MCF 10A (cell line): ENCODE measurements at regions of chr5 and their contacts with region 1.

Region 1: DNA sequence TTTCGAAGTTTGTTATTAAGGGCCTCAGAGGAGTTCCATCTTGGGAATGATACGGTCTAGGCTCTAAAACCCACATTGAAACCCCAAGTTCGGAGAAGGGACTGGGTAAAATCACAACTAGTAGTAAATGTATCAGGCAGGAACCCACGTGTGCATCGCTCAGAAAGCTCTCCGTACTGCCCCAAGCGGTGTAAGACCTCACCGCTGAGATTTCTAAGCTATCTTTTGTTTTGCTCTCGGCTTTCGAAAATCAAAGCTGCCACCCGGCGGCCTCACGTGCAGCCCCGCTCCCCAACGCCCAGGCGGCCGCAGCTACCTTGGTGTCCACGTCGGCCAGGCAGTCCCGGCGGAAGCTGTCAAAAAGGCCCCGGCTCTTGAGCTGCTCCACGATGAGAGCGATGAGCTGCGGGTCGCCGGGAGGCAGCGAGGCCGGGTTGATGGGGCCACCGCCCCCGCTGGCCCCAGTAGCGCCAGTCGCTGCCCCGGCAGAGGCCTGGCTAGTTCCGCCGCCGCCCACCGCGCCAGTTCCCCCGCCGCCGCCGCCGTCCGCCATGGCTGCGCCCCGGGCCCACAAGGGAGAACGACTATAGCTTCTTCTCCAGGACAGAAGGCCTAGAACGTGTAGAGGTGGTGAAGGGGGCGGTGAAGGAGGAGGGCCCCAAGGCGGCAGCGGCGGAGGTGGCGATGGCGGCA is 420 bp downstream of the BOD1 start:
- DNase-seq: peak; percentile 85
- H3K4me3 Mint-ChIP-seq: peak overlapping the region; percentile 78
- H3K27ac Mint-ChIP-seq: peak overlapping the region; percentile 77
- H3K4me1 Mint-ChIP-seq: peaks cover 38% of the 10 kb centered on the region
- H3K27me3 Mint-ChIP-seq: no peaks in the 10 kb centered on the region
- CTCF ChIP-seq: peak; percentile 70

Region 2: DNA sequence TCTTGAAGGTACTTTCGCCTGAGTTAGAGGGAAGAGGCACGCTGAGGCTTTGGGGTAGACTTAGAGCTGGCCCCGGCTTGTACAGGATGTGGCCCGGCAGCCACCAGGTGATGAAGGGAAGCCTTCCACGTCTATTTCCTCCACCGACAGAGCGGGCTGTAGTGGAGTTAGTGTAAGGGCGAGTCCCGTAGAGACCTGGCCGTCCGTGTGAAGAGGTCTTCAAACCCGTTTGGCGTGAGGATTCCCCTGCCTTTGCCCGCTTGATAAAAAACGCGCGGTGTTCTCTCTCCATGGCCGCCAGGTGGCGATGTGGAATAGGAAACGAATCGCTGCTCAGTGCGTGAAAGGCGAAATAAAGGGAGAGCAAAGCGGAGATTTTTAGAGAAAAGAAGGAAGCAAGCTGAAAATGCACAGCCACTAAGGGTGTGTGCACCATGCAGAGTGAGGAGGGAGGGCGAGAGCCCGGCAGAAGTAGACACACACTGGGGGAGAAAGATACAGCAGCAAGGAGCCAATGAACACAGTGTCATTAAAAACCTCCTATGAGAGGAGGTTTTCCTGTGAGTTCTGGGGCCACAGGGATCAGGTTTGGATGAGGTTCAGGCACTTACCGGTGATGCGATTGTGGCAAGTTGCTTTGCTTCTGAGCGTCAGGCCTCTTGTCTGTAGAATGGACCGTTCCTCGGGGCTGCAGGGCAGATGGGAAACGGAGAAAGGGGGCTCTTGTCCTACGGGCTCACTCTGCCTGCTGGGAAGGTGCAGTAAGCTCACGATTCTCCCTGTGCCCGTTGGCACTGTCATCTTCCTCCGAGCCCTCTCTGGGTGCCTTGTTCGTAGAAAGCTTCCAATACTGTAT is 322.0 kb before region 1 on chr5:
- CTCF ChIA-PET with region 1: interaction called, 99 read pairs
- POLR2A ChIA-PET with region 1: interaction called, 46 read pairs
- intact Hi-C with region 1: loop called (anchors 1 kb)
- DNase-seq: peak; percentile 94
- H3K4me3 Mint-ChIP-seq: peak overlapping the region; percentile 9
- H3K27ac Mint-ChIP-seq: peak overlapping the region; percentile 24
- H3K4me1 Mint-ChIP-seq: peaks cover 21% of the 10 kb centered on the region
- H3K27me3 Mint-ChIP-seq: no peaks in the 10 kb centered on the region
- CTCF ChIP-seq: peak; percentile 93

Region 3: GRCh38 chr5:173602423-173602822 is 13.6 kb before region 1 on chr5:
- CTCF ChIA-PET with region 1: interaction called, 26 read pairs
- POLR2A ChIA-PET with region 1: interaction called, 9 read pairs
- intact Hi-C with region 1: no loop called
- DNase-seq: peak; percentile 55
- H3K4me3 Mint-ChIP-seq: no peak overlapping the region
- H3K27ac Mint-ChIP-seq: no peak overlapping the region
- H3K4me1 Mint-ChIP-seq: peaks cover 5% of the 10 kb centered on the region
- H3K27me3 Mint-ChIP-seq: no peaks in the 10 kb centered on the region
- CTCF ChIP-seq: no peak

Region 4: DNA sequence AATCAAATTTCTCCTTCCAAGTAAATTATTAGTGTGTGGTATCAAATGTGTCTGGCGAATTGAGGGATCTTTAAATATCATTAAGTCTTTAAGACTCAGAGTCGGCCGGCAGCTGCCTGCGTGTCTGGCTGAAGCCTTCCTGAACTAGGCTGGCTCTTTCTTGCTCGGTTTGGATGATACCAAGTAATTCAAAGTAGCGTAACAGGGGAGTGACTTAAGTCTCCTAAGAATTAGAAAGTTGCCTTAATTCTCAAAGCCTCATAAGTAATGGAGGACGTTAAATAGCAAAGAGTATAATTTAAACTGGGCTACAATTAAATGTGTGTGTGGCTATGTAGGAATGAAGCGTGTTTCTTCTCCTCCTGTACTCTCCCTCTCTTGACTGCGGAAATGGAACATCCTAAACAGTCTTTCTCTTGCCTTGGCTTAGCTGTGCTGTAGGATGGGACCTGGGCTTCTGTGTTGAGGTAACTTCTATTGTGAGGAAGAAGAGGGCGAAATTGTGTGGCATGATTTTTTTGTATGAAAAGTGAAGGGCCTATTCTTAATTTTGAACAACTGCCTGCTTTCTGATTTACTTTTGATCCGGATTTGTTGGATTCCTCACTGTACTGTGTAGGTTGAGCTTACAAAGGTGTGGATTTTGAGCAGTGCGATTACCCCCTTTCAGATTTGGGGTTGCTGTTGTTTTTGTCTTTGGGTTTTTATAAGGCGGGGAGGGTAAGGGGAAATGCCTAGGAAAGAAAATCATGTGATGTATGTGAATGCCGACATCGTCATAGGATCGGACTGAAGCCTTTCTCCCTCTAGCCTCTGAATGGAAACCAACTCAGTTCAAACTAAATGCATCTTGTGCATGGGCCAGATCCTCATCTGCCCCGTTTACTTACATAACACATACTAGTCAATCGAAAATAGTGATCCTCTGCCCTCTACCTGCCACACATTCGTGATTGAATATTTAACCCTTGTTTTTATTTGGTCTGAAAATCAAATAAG is 302.1 kb after region 1 on chr5:
- CTCF ChIA-PET with region 1: interaction called, 8 read pairs
- POLR2A ChIA-PET with region 1: interaction called, 11 read pairs
- intact Hi-C with region 1: loop called (anchors 1 kb)
- DNase-seq: peak; percentile 94
- H3K4me3 Mint-ChIP-seq: no peak overlapping the region
- H3K27ac Mint-ChIP-seq: no peak overlapping the region
- H3K4me1 Mint-ChIP-seq: peaks cover 8% of the 10 kb centered on the region
- H3K27me3 Mint-ChIP-seq: no peaks in the 10 kb centered on the region
- CTCF ChIP-seq: no peak

Region 5: DNA sequence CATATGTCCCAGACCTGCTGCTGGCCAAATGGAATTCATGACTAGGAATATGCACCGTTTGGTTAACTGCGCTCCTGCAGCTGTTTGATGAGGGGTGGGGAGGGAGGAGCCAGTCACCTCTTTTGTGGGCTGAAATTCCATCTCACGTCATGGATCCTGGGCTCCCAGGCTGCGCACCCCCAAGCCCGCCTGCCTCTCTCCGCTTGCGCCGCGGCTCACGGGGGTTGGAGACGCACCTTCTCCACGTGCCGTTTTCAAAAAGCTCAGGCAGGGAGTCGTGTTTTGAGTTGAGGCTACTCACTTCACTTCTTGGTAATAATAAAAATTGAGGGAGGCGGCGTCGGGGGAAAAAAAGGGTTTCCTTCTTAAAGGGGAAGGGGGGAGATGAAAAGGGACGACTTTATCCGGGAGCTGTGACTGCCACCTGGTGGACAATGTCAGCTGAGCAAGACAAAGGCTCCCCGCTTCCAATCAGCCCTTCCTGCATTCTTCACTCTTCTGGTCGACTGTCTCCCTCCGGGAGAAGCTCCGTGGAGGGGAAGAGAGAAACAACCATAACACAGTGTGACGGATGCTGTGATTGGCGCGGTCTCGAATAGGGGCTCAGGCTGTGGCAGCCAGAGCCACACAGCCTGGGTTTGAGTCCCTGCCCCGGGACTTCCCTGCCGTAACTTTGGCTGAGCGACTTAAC is 357.0 kb after region 1 on chr5:
- CTCF ChIA-PET with region 1: interaction called, 334 read pairs
- POLR2A ChIA-PET with region 1: interaction called, 64 read pairs
- intact Hi-C with region 1: loop called (anchors 1 kb)
- DNase-seq: peak; percentile 87
- H3K4me3 Mint-ChIP-seq: peak overlapping the region; percentile 59
- H3K27ac Mint-ChIP-seq: peak overlapping the region; percentile 57
- H3K4me1 Mint-ChIP-seq: peaks cover 23% of the 10 kb centered on the region
- H3K27me3 Mint-ChIP-seq: peaks cover 20% of the 10 kb centered on the region
- CTCF ChIP-seq: peak; percentile 95

Region 6: DNA sequence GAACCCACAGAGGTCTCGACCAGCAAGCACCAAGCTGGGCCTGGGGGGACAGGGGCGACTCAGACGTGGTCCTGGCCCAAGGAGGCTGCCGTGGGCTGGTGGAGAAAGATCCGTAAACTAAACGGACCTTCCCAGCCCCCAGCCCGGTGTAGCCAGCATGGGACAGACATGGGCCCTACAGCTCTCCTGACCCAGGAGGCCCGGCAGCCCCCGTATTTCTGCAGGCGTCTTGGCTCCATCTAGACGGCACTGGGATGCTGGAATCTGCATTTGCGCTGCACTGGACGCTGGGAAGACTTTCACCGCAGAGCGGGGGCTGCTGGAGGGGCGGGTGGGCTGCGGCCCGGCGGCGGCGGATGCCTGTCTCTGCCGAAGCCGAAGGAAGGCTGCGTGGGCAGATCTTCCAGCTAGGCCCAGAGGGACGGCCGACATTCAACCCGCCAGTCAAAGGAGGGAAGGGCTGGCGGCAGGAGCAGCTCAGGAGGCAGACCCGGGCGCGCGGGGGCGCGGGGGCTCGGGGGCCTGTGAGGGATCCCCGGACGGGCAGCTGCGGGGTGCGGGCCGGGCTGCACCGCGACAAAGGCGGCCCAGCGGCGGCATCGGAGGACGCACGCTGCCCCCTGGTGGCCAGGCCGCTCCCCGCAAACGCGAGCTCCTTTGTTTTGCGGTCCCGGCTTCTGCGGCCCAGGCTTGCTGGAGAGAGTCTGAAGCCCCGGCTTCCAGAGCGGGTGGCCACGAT is 695.7 kb after region 1 on chr5:
- CTCF ChIA-PET with region 1: interaction called, 30 read pairs
- POLR2A ChIA-PET with region 1: interaction called, 5 read pairs
- intact Hi-C with region 1: no loop called
- DNase-seq: peak; percentile 62
- H3K4me3 Mint-ChIP-seq: peak overlapping the region; percentile 24
- H3K27ac Mint-ChIP-seq: no peak overlapping the region
- H3K4me1 Mint-ChIP-seq: no peaks in the 10 kb centered on the region
- H3K27me3 Mint-ChIP-seq: peaks cover 42% of the 10 kb centered on the region
- CTCF ChIP-seq: peak; percentile 99